Posterior vena cava (tissue), 2 donors: ENCODE measurements at regions of chr2 and their contacts with region 1.

Region 1: GRCh38 chr2:142582317-142582716 is 295.1 kb upstream of the KYNU start:
- DNase-seq: no peak

Region 2: DNA sequence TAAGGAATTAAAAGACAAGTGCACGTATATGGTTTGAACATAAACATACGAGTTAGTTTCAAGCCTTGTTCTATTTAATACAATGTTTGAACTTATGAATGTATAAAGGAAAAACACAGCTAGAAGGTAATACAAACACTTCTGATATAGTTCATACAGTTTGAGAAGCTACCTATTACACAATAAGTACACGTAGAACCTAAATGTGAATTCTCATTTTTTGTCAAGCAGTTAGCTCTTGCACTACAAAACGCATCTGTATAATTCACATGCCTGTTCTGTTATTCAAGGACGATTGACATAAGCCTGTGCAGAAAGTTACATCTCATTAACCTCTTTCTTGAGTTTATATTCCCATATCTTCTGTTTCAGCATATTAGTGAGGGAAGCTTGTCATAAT is 454.2 kb before region 1 on chr2:
- intact Hi-C with region 1: no loop called
- DNase-seq: no peak

Region 3: GRCh38 chr2:142557391-142557790 is 24.9 kb before region 1 on chr2:
- intact Hi-C with region 1: loop called in 1 of 2 experiments (anchors 1 kb)
- DNase-seq: no peak

Region 4: GRCh38 chr2:142642654-142643053 is 60.3 kb after region 1 on chr2:
- intact Hi-C with region 1: no loop called
- DNase-seq: no peak